Gastrocnemius medialis (tissue), 4 donors: ENCODE measurements at regions of chr17 and their contacts with region 1.

Region 1: GRCh38 chr17:64063766-64064224 is 43.4 kb upstream of the ICAM2 start:
- DNase-seq: peak in 1 of 2 donors; percentile 28
- ATAC-seq: no peak
- H3K4me3 ChIP-seq: no peak overlapping the region
- H3K27ac ChIP-seq: no peak overlapping the region
- H3K4me1 ChIP-seq: no peaks in the 10 kb centered on the region
- H3K27me3 ChIP-seq: no peaks in the 10 kb centered on the region
- CTCF ChIP-seq: peak in 3 of 5 experiments; percentile 40 to 55 (median 49)
- POLR2A ChIP-seq: no peak

Region 2: DNA sequence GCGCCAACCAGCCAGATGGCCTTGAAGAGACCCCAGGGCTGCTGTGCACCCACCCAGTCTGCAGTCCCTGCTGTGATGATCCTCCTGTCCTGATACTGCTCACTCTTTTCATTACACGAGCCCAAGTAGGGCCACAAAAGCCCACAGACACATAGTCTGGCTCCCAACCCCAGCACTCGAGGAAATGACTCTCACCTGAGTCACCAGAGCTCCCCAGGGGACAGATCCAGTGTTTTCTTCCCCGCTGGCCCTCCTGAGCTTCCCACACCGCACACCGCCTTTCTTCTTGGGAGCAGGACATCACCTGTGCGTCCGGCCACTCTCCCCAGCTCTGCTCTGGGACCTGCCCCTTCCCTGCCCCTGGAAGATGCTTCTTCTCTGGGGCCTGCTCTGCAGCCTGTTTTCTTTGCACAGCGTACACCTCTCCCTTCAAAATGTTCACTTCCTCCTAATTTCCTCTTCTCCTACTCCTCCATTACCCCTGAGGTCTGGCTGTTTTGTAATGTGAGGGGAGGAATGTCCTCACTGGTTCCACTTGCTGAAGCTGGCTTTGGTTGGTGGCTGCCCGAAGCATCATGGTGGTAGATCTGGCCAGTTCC is 89.1 kb before region 1 on chr17:
- in situ Hi-C with region 1: no loop called
- intact Hi-C with region 1: no loop called
- DNase-seq: peak; percentile 84 to 87
- ATAC-seq: peak; percentile 68 to 77
- H3K4me3 ChIP-seq: no peak overlapping the region
- H3K27ac ChIP-seq: peak overlapping the region; percentile 98 to 100 (median 99)
- H3K4me1 ChIP-seq: peaks cover 72% of the 10 kb centered on the region in 2 donors
- H3K27me3 ChIP-seq: no peaks in the 10 kb centered on the region
- CTCF ChIP-seq: no peak
- POLR2A ChIP-seq: peak; percentile 47 to 55

Region 3: GRCh38 chr17:64099543-64099942 is 35.7 kb after region 1 on chr17:
- in situ Hi-C with region 1: no loop called
- intact Hi-C with region 1: loop called (anchors 1 kb)
- DNase-seq: no peak
- ATAC-seq: no peak
- H3K4me3 ChIP-seq: no peak overlapping the region
- H3K27ac ChIP-seq: no peak overlapping the region
- H3K4me1 ChIP-seq: peaks cover 0 to 7% of the 10 kb centered on the region in 2 donors
- H3K27me3 ChIP-seq: no peaks in the 10 kb centered on the region
- CTCF ChIP-seq: no peak
- POLR2A ChIP-seq: no peak

Region 4: GRCh38 chr17:64129764-64130558 is 66.2 kb after region 1 on chr17 and contains the start of gene ERN1:
- in situ Hi-C with region 1: no loop called
- intact Hi-C with region 1: loop called (anchors 2 kb)
- DNase-seq: peak; percentile 87 to 93
- ATAC-seq: peak; percentile 85 to 88
- H3K4me3 ChIP-seq: peak within 1 kb of the TSS; percentile 60 to 85 (median 78)
- H3K27ac ChIP-seq: peak within 1 kb of the TSS; percentile 88 to 95 (median 92)
- H3K4me1 ChIP-seq: peaks cover 17 to 21% of the 10 kb centered on the region in 2 donors
- H3K27me3 ChIP-seq: no peaks in the 10 kb centered on the region
- CTCF ChIP-seq: peak in 2 of 5 experiments; percentile 3 to 15
- POLR2A ChIP-seq: peak; percentile 89 to 94
- total RNA-seq, gene ERN1: 9.7 to 27.5 (median 13.8) TPM